ENCODE measurements at regions of chr7 and their contacts with region 1.

Region 1: DNA sequence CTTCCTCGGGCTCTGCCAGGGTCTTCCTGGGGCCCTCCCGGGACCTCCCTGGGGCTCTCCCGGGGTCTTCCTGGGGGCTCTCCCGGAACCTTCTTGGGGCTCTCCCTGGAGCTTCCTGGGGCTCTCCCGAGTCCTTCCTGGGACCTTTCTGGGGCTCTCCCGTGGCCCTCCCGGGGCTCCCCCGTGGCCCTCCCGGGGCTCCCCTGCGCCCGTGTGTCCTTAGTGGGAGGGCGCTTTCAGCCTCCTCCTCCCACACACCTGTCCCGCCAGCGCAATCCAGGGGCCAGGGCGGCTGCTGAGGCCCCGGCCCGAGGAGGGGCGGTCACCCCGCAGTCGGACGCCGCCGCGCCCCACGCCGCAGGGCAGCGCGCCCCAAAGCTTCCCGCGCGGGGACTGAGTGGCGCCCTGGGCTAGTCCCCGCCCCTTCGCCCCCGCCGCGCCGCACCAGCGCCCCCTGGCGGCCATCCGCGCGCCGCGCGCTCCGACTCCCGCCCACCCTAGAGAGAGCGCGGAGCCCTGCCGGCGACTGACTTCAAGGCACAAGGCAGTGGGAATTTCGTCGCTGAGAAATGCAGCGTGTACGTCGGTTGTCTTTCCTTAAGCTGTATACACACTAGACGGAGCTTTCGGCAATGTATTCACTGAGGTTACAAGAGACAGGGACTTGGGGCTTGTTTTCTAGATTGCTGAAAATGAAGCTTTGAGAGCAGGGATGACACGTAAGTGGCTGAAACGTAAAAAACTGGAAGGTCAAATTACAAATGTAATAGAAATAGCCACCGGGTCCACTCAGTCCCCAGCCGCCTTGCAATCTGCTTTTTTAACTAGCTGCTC is 47.1 kb downstream of the INSIG1 start:
- DNase-seq: peak; percentile 76 to 95 (median 83)
- ATAC-seq: peak; percentile 97
- H3K4me3 ChIP-seq: peak overlapping the region; percentile 28 to 33
- H3K4me3 Mint-ChIP-seq: peak overlapping the region; percentile 66
- H3K27ac ChIP-seq: no peak overlapping the region
- H3K27ac Mint-ChIP-seq: no peak overlapping the region
- H3K4me1 ChIP-seq: peaks cover 9% of the 10 kb centered on the region
- H3K4me1 Mint-ChIP-seq: peaks cover 4% of the 10 kb centered on the region
- H3K27me3 ChIP-seq: peaks cover 0 to 4% of the 10 kb centered on the region in 2 experiments
- H3K27me3 Mint-ChIP-seq: no peaks in the 10 kb centered on the region
- CTCF ChIP-seq: peak; percentile 71

Region 2: GRCh38 chr7:155003376-155004214 is 341.2 kb before region 1 on chr7:
- CTCF ChIA-PET with region 1: no interaction called
- POLR2A ChIA-PET with region 1: no interaction called
- intact Hi-C with region 1: loop called (anchors 2 kb)
- DNase-seq: peak; percentile 73 to 91 (median 86)
- ATAC-seq: peak; percentile 89
- H3K4me3 ChIP-seq: peak overlapping the region; percentile 92 to 93
- H3K4me3 Mint-ChIP-seq: peak overlapping the region; percentile 93
- H3K27ac ChIP-seq: peak overlapping the region; percentile 69 to 72
- H3K27ac Mint-ChIP-seq: peak overlapping the region; percentile 93
- H3K4me1 ChIP-seq: peaks cover 11% of the 10 kb centered on the region
- H3K4me1 Mint-ChIP-seq: peaks cover 24% of the 10 kb centered on the region
- H3K27me3 ChIP-seq: no peaks in the 10 kb centered on the region
- H3K27me3 Mint-ChIP-seq: no peaks in the 10 kb centered on the region
- CTCF ChIP-seq: no peak

Region 3: DNA sequence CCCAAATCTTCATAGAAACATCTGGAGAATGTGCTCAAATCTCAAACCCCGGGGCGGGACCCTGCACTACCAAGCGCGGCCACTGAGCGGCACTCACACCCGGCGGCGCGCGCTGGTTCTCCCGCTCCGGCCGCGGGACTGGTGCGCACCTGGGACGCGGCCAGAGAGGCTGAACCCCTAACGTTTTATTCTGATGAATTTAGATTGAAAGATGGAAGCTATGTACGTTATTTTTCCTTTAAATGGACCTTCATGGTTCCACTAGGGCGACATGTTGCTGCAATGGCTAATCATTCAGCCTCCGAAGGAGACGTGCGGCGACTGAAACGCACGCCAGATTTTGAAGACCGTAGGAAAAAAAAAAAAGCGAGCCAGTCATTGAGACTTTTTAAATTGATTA is 154.1 kb before region 1 on chr7:
- CTCF ChIA-PET with region 1: interaction called, 83 read pairs
- POLR2A ChIA-PET with region 1: no interaction called
- intact Hi-C with region 1: loop called (anchors 1 kb)
- DNase-seq: peak in 8 of 9 experiments; percentile 38 to 79 (median 62)
- ATAC-seq: peak; percentile 90
- H3K4me3 ChIP-seq: no peak overlapping the region
- H3K4me3 Mint-ChIP-seq: peak overlapping the region; percentile 22
- H3K27ac ChIP-seq: no peak overlapping the region
- H3K27ac Mint-ChIP-seq: no peak overlapping the region
- H3K4me1 ChIP-seq: peaks cover 2% of the 10 kb centered on the region
- H3K4me1 Mint-ChIP-seq: peaks cover 3% of the 10 kb centered on the region
- H3K27me3 ChIP-seq: peaks cover 0 to 2% of the 10 kb centered on the region in 2 experiments
- H3K27me3 Mint-ChIP-seq: peaks cover 14% of the 10 kb centered on the region
- CTCF ChIP-seq: peak; percentile 91

Region 4: DNA sequence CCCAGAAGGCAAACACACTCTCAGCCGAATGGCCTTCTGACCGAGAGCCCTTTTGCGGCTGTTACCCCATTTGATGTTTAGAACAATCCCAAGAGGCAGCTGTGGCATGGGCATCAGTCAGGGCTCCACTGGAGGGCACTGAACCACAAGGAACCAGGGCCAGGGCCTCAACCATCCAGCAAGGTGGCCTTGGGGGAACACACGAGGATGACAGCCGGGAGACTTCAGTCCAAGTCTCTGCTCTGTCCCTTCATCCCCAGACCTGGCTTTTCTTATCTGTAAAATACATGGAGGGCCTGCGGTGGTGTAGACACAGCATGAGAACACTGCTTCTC is 110.7 kb before region 1 on chr7:
- CTCF ChIA-PET with region 1: interaction called, 10 read pairs
- POLR2A ChIA-PET with region 1: no interaction called
- intact Hi-C with region 1: loop called (anchors 1 kb)
- DNase-seq: peak in 6 of 9 experiments; percentile 13 to 53 (median 22)
- ATAC-seq: no peak
- H3K4me3 ChIP-seq: no peak overlapping the region
- H3K4me3 Mint-ChIP-seq: no peak overlapping the region
- H3K27ac ChIP-seq: no peak overlapping the region
- H3K27ac Mint-ChIP-seq: no peak overlapping the region
- H3K4me1 ChIP-seq: no peaks in the 10 kb centered on the region
- H3K4me1 Mint-ChIP-seq: no peaks in the 10 kb centered on the region
- H3K27me3 ChIP-seq: no peaks in the 10 kb centered on the region
- H3K27me3 Mint-ChIP-seq: peaks cover 6% of the 10 kb centered on the region
- CTCF ChIP-seq: no peak

Region 5: GRCh38 chr7:155283565-155284194 is 61.1 kb before region 1 on chr7:
- CTCF ChIA-PET with region 1: interaction called, 13 read pairs
- POLR2A ChIA-PET with region 1: no interaction called
- intact Hi-C with region 1: loop called in 1 of 2 experiments (anchors 5 kb)
- DNase-seq: no peak
- ATAC-seq: no peak
- H3K4me3 ChIP-seq: no peak overlapping the region
- H3K4me3 Mint-ChIP-seq: no peak overlapping the region
- H3K27ac ChIP-seq: no peak overlapping the region
- H3K27ac Mint-ChIP-seq: no peak overlapping the region
- H3K4me1 ChIP-seq: peaks cover 6% of the 10 kb centered on the region
- H3K4me1 Mint-ChIP-seq: peaks cover 19% of the 10 kb centered on the region
- H3K27me3 ChIP-seq: no peaks in the 10 kb centered on the region
- H3K27me3 Mint-ChIP-seq: peaks cover 3% of the 10 kb centered on the region
- CTCF ChIP-seq: no peak

Region 6: DNA sequence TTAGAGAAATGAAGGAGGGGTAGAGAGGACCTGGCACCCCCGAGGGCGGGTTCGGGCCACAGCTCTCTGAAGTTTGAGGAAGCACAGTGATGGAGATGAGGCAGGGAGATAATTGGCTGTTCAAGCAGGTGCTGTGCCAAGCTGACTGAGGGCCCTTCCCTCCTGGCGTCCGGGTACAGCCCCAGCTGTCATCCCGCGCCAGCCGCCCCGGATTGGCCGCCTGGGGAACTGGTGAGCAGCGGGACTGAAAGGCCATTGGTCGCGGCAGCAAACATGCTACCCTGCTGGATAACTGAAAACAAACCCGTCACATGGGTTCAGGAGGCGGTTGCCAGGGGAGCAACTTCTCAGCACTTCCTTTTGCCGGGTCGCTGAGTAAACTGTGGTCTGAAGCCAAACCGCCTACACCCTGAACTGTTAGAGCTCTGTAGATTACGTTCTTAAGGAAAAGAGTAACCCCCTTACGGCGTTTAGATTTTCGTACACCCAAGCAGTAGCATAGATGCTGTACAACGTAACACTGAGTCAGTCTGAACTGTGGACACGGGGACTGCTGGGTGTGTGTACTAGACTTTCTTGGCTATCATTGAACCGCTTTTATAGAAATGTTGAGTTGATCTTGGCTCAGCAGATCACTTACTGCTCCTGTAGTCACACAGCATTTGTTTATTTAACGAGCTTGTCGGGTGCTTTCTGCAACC is 45.8 kb before region 1 on chr7:
- CTCF ChIA-PET with region 1: interaction called, 25 read pairs
- POLR2A ChIA-PET with region 1: interaction called, 5 read pairs
- intact Hi-C with region 1: loop called (anchors 1 to 2 kb)
- DNase-seq: peak; percentile 92 to 99 (median 96)
- ATAC-seq: peak; percentile 70
- H3K4me3 ChIP-seq: peak overlapping the region; percentile 57 to 67
- H3K4me3 Mint-ChIP-seq: peak overlapping the region; percentile 90
- H3K27ac ChIP-seq: peak overlapping the region; percentile 79 to 90
- H3K27ac Mint-ChIP-seq: peak overlapping the region; percentile 98
- H3K4me1 ChIP-seq: peaks cover 34% of the 10 kb centered on the region
- H3K4me1 Mint-ChIP-seq: peaks cover 42% of the 10 kb centered on the region
- H3K27me3 ChIP-seq: no peaks in the 10 kb centered on the region
- H3K27me3 Mint-ChIP-seq: no peaks in the 10 kb centered on the region
- CTCF ChIP-seq: no peak

Measured in CD8-positive, alpha-beta T cell (primary cell).